ENCODE measurements at regions of chr11 and their contacts with region 1.

Region 1: DNA sequence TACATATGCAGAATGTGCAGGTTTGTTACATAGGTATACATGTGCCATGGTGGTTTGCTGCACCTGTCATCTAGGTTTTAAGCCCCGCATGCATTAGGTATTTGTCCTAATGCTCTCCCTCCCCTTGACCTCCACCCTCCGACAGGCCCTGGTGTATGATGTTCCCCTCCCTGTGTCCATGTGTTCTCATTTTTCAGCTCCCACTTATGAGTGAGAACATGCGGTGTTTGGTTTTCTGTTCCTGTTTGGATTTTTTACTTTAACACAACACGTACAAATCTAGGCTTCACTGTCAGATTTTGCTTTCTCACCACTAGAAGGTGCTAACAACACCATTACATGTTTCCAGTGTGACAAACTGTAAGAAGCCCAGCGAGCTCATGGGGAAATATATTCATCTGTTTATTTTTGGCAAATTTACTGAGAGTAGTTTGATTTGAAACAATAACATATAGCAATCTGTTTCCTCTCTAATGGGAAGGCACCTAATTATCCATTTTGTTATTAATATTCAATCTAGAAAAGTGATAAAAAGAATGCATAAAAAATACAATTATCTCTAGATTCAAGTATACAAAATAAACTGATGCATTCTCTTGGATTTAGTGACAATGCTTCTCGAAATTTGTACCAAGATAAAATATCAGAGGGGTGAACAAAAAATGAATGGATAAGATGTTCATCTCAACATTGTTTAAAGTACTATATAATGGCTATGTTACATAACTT is 23.2 kb upstream of the BIRC3 start:
- DNase-seq: peak in 1 of 2 experiments; percentile 32
- H3K4me3 ChIP-seq: no peak overlapping the region
- H3K4me3 Mint-ChIP-seq: no peak overlapping the region
- H3K27ac Mint-ChIP-seq: no peak overlapping the region
- H3K4me1 ChIP-seq: no peaks in the 10 kb centered on the region
- H3K4me1 Mint-ChIP-seq: peaks cover 6% of the 10 kb centered on the region
- H3K27me3 ChIP-seq: no peaks in the 10 kb centered on the region
- H3K27me3 Mint-ChIP-seq: no peaks in the 10 kb centered on the region
- CTCF ChIP-seq: peak; percentile 72 to 89

Region 2: DNA sequence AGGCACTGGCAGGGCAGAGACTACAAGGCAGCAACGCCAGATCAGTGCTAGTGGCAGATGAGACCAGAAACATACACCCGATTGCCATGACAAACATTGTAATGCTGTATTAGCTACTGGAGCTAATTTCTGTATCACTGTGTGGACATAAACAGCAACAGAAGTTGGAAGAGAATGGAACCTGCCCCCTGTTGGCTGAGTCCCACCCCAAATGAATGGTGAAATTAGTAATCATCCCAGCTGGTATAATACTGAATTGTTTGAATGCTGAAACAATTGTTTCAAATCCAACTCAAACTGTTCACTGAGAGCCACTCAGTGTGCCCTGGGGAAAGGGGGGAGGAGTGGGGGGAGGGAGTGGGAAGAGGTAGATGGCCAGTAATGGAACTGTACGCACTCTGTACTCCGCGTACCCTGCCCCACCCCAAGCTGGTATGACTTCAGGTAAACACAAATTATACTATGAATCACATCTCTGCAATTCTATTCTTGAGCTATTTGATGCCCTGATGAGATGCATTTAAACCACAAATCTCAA is 12.1 kb after region 1 on chr11:
- CTCF ChIA-PET with region 1: interaction called, 8 read pairs
- POLR2A ChIA-PET with region 1: no interaction called
- intact Hi-C with region 1: loop called (anchors 1 kb)
- DNase-seq: peak; percentile 43 to 75
- H3K4me3 ChIP-seq: no peak overlapping the region
- H3K4me3 Mint-ChIP-seq: no peak overlapping the region
- H3K27ac Mint-ChIP-seq: no peak overlapping the region
- H3K4me1 ChIP-seq: peaks cover 24% of the 10 kb centered on the region
- H3K4me1 Mint-ChIP-seq: peaks cover 18% of the 10 kb centered on the region
- H3K27me3 ChIP-seq: no peaks in the 10 kb centered on the region
- H3K27me3 Mint-ChIP-seq: no peaks in the 10 kb centered on the region
- CTCF ChIP-seq: peak; percentile 20 to 23